Mammary epithelial cell (primary cell): ENCODE measurements at regions of chr2 and their contacts with region 1.

Region 1: GRCh38 chr2:193072647-193073046 is 877.9 kb upstream of the TMEFF2 start:
- DNase-seq: no peak
- H3K4me3 ChIP-seq: no peak overlapping the region
- H3K27ac ChIP-seq: no peak overlapping the region
- H3K4me1 ChIP-seq: no peaks in the 10 kb centered on the region
- H3K27me3 ChIP-seq: no peaks in the 10 kb centered on the region
- CTCF ChIP-seq: no peak

Region 2: GRCh38 chr2:193011870-193012269 is 60.8 kb before region 1 on chr2:
- CTCF ChIA-PET with region 1: no interaction called
- dilution Hi-C with region 1: loop called (anchors 5 kb)
- in situ Hi-C with region 1: no loop called
- intact Hi-C with region 1: no loop called
- DNase-seq: no peak
- H3K4me3 ChIP-seq: no peak overlapping the region
- H3K27ac ChIP-seq: no peak overlapping the region
- H3K4me1 ChIP-seq: no peaks in the 10 kb centered on the region
- H3K27me3 ChIP-seq: no peaks in the 10 kb centered on the region
- CTCF ChIP-seq: no peak